Activated CD4-positive, alpha-beta memory T cell treated with anti-CD3 and anti-CD28 coated beads, Interleukin-2, amount 10 ng/mL, durations not matched to agents 7 days and 5 days (primary cell): ENCODE measurements at regions of chr14 and their contacts with region 1.

Region 1: DNA sequence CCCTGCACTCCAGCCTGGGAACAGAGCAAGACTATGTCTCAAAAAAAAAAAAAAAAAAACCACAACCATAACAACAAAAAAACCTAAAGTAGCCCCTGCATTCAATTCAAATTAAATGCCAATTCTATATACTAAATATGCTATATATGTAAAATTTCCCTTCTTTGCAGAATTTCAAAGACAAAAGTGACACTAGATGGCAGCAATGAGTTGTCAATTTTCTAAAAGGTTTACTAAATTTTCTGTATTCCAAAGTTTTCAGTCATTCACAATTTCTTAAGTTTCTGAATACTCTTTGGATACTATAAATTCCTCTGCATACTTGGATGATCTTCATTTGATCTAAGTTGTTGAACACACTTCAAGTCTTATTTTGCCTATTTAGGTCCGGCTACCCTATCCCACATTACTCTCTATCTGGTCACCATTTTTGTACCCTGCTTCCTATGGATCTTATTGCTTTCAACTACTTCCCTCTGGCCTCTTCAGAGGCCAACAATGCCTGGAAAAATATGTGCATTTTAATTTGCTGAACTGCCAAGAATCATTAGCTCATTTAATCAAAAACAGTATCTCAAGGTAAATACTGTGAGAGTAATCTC is 27.9 kb downstream of the HNRNPC start:
- DNase-seq: no peak
- H3K4me3 Mint-ChIP-seq: no peak overlapping the region
- H3K27ac Mint-ChIP-seq: peak overlapping the region; percentile 47
- H3K4me1 Mint-ChIP-seq: peaks cover 70% of the 10 kb centered on the region
- H3K27me3 Mint-ChIP-seq: no peaks in the 10 kb centered on the region

Region 2: GRCh38 chr14:21257394-21257909 is 16.1 kb after region 1 on chr14:
- CTCF ChIA-PET with region 1: interaction called, 6 read pairs
- POLR2A ChIA-PET with region 1: interaction called, 64 read pairs
- DNase-seq: no peak
- H3K4me3 Mint-ChIP-seq: peak overlapping the region; percentile 22
- H3K27ac Mint-ChIP-seq: peak overlapping the region; percentile 65
- H3K4me1 Mint-ChIP-seq: peaks cover 74% of the 10 kb centered on the region
- H3K27me3 Mint-ChIP-seq: no peaks in the 10 kb centered on the region

Region 3: GRCh38 chr14:21263656-21264411 is 22.5 kb after region 1 on chr14:
- CTCF ChIA-PET with region 1: interaction called, 4 read pairs
- POLR2A ChIA-PET with region 1: interaction called, 61 read pairs
- DNase-seq: no peak
- H3K4me3 Mint-ChIP-seq: peak overlapping the region; percentile 61
- H3K27ac Mint-ChIP-seq: peak overlapping the region; percentile 99
- H3K4me1 Mint-ChIP-seq: peaks cover 75% of the 10 kb centered on the region
- H3K27me3 Mint-ChIP-seq: no peaks in the 10 kb centered on the region